Heart right ventricle (tissue), 16 donors: ENCODE measurements at regions of chr2 and their contacts with region 1.

Region 1: DNA sequence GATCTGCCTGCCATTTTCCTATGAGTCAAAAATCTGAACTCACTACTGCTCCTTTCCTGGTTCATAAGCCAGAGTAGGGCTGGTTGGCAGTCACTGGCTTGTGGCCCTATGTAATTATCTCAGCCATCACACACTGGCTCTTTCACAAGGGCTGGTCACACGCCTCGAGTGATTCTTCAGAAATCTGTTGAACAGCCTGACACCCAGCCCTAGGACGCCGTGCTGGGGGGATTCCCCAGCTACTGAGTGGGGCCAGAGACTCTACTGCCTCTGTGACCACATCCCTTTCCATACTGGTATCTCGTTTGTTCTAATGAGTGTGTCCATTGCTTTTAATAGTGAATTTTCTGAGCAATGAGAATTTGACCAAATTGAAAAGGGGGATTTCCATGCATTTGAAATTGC is 45.8 kb upstream of the RBM44 start:
- DNase-seq: no peak
- ATAC-seq: peak in 3 of 8 donors; percentile 14 to 35 (median 19)
- H3K4me3 ChIP-seq: no peak overlapping the region
- H3K27ac ChIP-seq: no peak overlapping the region
- H3K4me1 ChIP-seq: peaks cover 0 to 10% (median 0%) of the 10 kb centered on the region in 9 donors
- H3K27me3 ChIP-seq: no peaks in the 10 kb centered on the region
- CTCF ChIP-seq: no peak

Region 2: DNA sequence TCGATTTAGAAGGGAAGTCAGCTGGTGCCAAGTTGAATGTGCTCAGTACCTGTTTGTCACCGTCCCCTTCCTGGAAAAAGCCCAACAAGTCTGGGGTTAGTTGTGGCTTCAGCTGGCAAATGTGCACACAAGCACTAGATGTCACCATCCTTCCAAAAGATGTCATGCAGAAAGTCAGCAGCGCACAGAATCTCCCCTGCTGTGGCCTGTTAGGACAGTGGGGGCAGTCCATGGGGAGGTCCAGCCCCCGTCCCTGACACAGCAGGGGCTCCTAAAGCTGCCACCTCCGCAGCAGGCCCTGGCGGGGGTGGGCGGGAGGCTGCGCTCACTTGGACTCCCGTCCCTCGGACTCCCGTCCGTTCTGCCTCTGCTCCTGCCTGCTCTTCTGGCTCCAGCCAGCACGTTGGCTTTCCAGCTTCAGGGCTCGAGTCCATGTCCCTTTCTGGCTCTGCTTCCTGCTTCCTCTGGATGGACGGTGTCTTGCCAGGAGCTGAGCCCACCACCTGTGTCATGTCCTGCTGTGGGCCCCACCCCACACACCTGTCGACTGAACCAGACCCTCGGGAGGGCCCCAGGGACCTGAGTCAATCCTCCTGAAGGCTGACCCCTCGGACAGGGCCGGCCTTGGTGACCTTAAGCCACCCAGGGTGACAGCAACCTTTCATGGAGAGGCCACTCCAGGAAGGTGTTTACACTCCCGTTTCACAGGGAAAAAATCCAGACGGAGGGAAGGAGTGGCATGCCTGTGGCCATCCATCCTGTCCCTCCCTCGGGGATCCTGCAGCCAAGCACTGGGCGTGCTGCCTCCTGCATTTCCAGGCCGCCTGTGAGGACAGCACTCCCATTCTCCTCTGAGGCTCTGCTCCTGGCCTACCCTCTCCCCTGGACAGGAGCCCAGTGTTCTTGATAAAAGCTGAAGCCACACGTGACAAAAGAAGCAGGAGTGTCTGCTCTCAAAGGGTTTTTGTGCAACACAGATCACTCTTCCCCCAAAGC is 170.7 kb before region 1 on chr2:
- intact Hi-C with region 1: loop called in 4 of 10 experiments (anchors 5 kb)
- DNase-seq: peak; percentile 75 to 86
- ATAC-seq: peak; percentile 86 to 95 (median 90)
- H3K4me3 ChIP-seq: peak overlapping the region in 5 of 10 donors; percentile 1 to 44 (median 29)
- H3K27ac ChIP-seq: peak overlapping the region; percentile 72 to 92 (median 82)
- H3K4me1 ChIP-seq: peaks cover 0 to 30% (median 21%) of the 10 kb centered on the region in 9 donors
- H3K27me3 ChIP-seq: no peaks in the 10 kb centered on the region
- CTCF ChIP-seq: peak in 8 of 9 donors; percentile 31 to 85 (median 60)

Region 3: GRCh38 chr2:237714690-237715458 is 37.9 kb before region 1 on chr2:
- intact Hi-C with region 1: no loop called
- DNase-seq: no peak
- ATAC-seq: peak; percentile 46 to 83 (median 74)
- H3K4me3 ChIP-seq: peak overlapping the region in 8 of 10 donors; percentile 1 to 40 (median 26)
- H3K27ac ChIP-seq: peak overlapping the region; percentile 14 to 92 (median 80)
- H3K4me1 ChIP-seq: peaks cover 8 to 75% (median 60%) of the 10 kb centered on the region in 9 donors
- H3K27me3 ChIP-seq: no peaks in the 10 kb centered on the region
- CTCF ChIP-seq: no peak